ENCODE measurements at regions of chr14 and their contacts with region 1.

Region 1: DNA sequence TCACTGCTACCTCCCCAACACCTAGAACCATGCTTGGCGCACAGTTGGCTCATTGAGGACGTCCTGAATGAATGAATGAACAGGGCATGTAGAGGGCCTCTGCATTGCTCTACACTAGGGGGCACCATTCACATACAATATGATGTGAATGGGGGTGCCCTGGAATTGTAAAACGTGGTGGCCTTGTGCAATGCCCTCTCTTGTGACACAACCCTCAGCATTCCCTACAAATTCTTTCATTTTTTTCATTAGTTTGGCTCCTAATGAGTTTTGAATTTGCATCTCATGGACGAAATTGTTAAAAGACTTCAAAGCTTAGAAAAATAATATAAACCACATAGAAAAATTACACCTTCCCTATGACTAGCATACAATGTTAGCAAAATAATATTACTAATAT is 2.3 kb upstream of the DIO2 start:
- DNase-seq: peak; percentile 50
- H3K4me3 ChIP-seq: no peak overlapping the region
- H3K27ac ChIP-seq: no peak overlapping the region
- H3K4me1 ChIP-seq: no peaks in the 10 kb centered on the region
- H3K27me3 ChIP-seq: peaks cover 2% of the 10 kb centered on the region
- CTCF ChIP-seq: peak; percentile 81 to 82

Region 2: GRCh38 chr14:78959674-78960264 is 1253.8 kb before region 1 on chr14:
- CTCF ChIA-PET with region 1: no interaction called
- dilution Hi-C with region 1: no loop called
- in situ Hi-C with region 1: no loop called
- intact Hi-C with region 1: loop called (anchors 5 kb)
- DNase-seq: peak; percentile 56
- H3K4me3 ChIP-seq: no peak overlapping the region
- H3K27ac ChIP-seq: no peak overlapping the region
- H3K4me1 ChIP-seq: no peaks in the 10 kb centered on the region
- H3K27me3 ChIP-seq: no peaks in the 10 kb centered on the region
- CTCF ChIP-seq: peak; percentile 85 to 89

Region 3: DNA sequence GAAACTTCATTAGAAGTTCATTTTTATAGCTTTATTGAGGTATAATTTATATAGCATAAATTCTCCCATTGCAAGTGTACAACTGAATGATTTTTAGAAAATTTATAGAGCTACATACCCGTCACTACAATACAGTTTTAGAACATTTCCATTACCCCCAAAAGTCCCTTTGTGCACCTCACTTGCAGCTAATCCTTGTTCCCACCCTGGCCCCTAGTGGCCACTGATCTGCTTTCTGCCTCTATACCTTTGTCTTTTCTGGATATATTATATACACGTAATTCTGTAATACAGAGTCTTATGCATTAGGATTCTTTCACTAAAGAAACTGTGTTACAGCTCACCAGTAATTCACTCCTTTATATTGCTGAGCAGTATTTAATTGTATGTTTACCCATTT is 142.8 kb after region 1 on chr14:
- CTCF ChIA-PET with region 1: no interaction called
- dilution Hi-C with region 1: no loop called
- in situ Hi-C with region 1: no loop called
- intact Hi-C with region 1: loop called (anchors 10 kb)
- DNase-seq: no peak
- H3K4me3 ChIP-seq: no peak overlapping the region
- H3K27ac ChIP-seq: no peak overlapping the region
- H3K4me1 ChIP-seq: no peaks in the 10 kb centered on the region
- H3K27me3 ChIP-seq: no peaks in the 10 kb centered on the region
- CTCF ChIP-seq: peak; percentile 33 to 43

Region 4: GRCh38 chr14:80636071-80636470 is 422.5 kb after region 1 on chr14:
- CTCF ChIA-PET with region 1: no interaction called
- dilution Hi-C with region 1: no loop called
- in situ Hi-C with region 1: no loop called
- intact Hi-C with region 1: loop called (anchors 5 kb)
- DNase-seq: no peak
- H3K4me3 ChIP-seq: no peak overlapping the region
- H3K27ac ChIP-seq: no peak overlapping the region
- H3K4me1 ChIP-seq: peaks cover 20% of the 10 kb centered on the region
- H3K27me3 ChIP-seq: no peaks in the 10 kb centered on the region
- CTCF ChIP-seq: peak; percentile 33 to 46